Gastrocnemius medialis (tissue), 4 donors: ENCODE measurements at regions of chr16 and their contacts with region 1.

Region 1: DNA sequence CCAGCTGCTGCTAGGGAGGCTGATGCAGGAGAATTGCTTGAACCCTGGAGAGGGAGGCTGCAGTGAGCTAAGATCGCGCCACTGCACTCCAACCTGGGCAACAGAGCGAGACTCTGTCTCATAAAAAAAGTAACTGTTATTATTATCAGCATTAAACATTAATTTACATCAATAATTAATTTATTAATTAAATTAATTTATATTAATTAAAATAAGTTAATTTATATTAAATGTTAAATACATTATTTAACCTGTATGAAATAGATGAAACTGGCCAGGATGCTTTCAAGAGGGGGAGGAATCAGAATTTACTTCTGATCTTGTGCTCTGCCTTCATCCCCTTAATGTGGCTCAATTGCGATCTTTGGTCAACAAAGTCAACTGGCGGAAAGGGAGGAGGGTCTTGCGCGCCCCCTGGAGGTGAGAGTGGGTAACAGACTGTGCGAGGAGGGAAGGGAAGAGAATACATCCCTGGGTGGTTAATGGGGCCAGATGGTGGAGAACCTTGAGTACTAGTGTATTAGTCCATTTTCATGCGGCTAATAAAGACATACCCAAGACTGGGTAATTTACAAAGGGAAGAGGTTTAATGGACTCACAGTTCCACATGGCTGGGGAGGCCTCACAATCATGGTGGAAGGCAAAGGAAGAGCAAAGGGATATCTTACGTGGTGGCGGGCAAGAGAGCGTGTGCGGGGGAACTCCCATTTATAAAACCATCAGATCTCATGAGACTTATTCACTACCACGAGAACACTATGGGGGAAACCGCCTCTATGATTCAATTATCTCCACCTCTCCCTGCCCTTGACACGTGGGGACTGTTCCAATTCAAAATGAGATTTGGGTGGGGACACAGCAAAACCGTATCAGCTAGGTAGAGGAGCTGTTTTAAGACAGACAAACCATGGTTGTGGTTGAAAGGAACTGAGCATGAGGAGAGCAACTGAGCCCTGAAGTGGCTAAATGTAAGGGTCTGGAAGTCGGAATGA is 15.7 kb upstream of the CPPED1 start:
- DNase-seq: peak; percentile 9 to 21
- ATAC-seq: no peak
- H3K4me3 ChIP-seq: no peak overlapping the region
- H3K27ac ChIP-seq: no peak overlapping the region
- H3K4me1 ChIP-seq: no peaks in the 10 kb centered on the region
- H3K27me3 ChIP-seq: no peaks in the 10 kb centered on the region
- CTCF ChIP-seq: peak; percentile 46 to 82 (median 64)
- POLR2A ChIP-seq: no peak

Region 2: DNA sequence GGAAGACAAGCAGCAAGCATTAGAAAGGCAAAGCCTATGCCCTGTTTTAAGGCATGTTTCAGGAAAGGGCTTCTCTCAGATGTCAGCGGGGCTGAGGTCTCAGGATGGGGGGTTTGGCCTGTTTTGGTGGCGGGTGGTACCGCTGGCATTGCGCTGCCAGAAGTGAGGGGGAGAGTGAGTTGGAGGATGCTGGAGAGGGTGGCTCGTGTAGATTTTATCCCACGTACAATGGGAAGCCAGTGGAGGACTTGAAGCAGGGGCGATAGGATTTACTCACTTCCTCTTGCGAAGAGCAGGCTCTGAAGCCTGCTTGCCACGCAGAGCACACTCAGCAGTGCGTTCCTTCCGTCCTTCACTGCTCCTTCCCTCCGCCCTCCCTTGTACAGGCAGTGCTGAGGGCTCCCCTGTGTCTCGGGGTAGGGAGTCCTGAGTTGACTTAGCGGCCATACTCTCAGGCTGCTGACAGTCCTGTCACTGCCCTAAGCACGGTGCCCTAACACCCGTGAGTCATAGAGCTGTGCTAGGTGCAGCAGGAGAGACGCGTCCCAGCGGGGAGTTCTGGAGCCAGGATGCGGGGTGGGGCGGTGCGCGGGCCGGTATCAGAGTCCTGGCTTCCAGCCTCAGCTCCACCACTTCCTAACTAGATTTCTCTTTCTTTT is 729.8 kb before region 1 on chr16:
- in situ Hi-C with region 1: loop called in 2 of 4 experiments (anchors 25 kb)
- intact Hi-C with region 1: loop called (anchors 5 kb)
- DNase-seq: no peak
- ATAC-seq: peak in 1 of 2 donors; percentile 39
- H3K4me3 ChIP-seq: peak overlapping the region in 1 of 4 donors; percentile 24
- H3K27ac ChIP-seq: no peak overlapping the region
- H3K4me1 ChIP-seq: peaks cover 11% of the 10 kb centered on the region in 2 donors
- H3K27me3 ChIP-seq: no peaks in the 10 kb centered on the region
- CTCF ChIP-seq: no peak
- POLR2A ChIP-seq: no peak

Region 3: DNA sequence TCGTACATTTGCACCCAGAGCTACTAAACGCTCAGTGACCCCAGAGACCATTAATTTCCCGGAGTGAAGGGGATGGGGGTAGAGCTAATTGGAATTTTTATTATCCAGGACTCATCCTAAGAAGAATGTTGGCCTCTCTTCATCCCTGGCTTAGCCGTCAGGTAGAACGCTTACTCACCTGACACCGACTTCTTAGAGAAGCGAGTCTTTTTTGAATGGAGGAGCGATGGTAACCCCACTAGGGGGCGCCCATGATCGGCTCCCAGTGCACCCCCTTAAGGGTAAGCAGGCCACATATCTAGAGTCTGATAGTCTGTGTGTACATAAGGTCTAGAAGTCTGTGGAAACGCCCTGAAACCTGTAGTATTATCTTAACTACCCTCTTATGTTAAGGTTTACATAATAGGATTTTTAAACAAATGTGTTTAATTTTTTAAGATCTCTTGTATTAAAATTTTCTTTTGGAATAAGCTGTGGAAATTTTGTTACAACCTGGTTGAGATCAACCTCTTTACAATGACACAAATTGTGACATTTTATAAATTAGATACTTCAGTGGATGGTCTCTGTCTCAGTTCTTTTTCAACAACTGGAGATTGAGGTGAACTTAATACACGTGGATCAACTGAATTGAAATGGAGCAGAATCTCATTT is 245.6 kb before region 1 on chr16:
- in situ Hi-C with region 1: loop called in 1 of 4 experiments (anchors 10 kb)
- intact Hi-C with region 1: no loop called
- DNase-seq: no peak
- ATAC-seq: no peak
- H3K4me3 ChIP-seq: no peak overlapping the region
- H3K27ac ChIP-seq: no peak overlapping the region
- H3K4me1 ChIP-seq: no peaks in the 10 kb centered on the region
- H3K27me3 ChIP-seq: no peaks in the 10 kb centered on the region
- CTCF ChIP-seq: peak in 3 of 5 experiments; percentile 19 to 48 (median 48)
- POLR2A ChIP-seq: no peak